Endothelial cell of umbilical vein (primary cell): ENCODE measurements at regions of chr10 and their contacts with region 1.

Region 1: DNA sequence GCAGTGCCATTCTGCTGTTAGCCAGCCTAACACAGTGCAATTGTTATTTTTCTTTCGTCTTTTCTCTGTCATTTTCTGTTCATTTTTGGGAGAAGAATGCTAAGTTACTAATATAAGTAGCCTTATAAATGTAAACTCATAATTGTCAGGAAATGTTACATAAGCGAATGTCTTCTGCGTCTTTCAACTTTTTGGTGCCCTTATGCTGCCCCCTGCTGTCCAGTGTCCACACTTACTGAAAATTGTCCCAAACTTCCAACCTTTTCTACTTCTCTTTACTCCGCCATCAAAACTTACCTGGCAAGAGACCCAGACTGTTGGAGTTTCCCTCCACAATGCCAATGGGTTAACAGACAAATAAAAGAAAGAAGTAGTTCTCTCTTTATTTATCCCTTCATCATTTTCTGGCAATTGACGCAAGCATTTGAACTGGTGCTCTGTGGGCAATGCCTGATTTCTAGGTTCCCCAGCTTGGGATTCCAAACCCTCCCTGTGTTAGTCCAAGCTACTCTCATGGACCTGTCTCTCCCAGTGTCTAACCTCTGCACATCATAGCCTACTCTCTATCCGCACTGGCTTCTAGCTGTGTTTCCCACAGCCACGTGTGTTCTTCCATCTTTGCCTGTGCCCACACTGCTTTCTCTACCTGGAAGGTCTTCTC is 21.0 kb upstream of the EPC1 start:
- DNase-seq: peak; percentile 83
- H3K4me3 ChIP-seq: no peak overlapping the region
- H3K27ac ChIP-seq: no peak overlapping the region
- H3K4me1 ChIP-seq: peaks cover 2% of the 10 kb centered on the region
- H3K27me3 ChIP-seq: no peaks in the 10 kb centered on the region
- CTCF ChIP-seq: peak; percentile 70 to 72
- POLR2A ChIP-seq: no peak

Region 2: DNA sequence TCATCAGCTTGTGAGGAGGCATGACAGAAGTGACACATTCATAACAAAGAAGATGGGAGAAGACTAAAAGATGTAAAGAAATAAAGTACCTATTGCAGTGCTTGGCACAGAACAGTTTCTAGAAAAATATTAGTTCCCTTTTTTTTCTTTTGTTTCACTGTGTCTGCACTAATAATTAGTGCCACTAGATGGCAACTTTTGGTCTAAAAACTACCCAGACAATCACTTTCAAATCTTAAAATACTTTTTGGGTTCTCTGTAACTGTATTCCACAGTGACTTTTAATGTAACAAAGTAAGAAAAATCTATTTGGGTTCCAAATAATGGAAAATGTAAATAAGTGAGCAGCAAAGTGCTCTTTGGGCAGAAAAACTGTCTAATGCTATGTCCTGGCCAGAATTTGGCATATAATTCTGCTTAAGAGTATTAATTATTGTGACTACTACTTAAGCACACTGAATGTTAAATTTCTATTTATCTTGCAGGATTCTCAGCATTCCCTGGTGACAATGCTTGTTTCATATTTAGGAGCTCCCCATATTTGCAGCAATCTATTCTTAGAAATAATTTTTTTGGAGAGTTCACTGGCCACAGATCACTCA is 176.9 kb before region 1 on chr10:
- CTCF ChIA-PET with region 1: interaction called, 10 read pairs
- POLR2A ChIA-PET with region 1: no interaction called
- dilution Hi-C with region 1: no loop called
- intact Hi-C with region 1: loop called (anchors 1 kb)
- DNase-seq: peak; percentile 76
- H3K4me3 ChIP-seq: no peak overlapping the region
- H3K27ac ChIP-seq: no peak overlapping the region
- H3K4me1 ChIP-seq: peaks cover 7% of the 10 kb centered on the region
- H3K27me3 ChIP-seq: peaks cover 0 to 1% of the 10 kb centered on the region in 2 experiments
- CTCF ChIP-seq: peak; percentile 42 to 53
- POLR2A ChIP-seq: no peak